ENCODE measurements at regions of chr6 and their contacts with region 1.

Region 1: DNA sequence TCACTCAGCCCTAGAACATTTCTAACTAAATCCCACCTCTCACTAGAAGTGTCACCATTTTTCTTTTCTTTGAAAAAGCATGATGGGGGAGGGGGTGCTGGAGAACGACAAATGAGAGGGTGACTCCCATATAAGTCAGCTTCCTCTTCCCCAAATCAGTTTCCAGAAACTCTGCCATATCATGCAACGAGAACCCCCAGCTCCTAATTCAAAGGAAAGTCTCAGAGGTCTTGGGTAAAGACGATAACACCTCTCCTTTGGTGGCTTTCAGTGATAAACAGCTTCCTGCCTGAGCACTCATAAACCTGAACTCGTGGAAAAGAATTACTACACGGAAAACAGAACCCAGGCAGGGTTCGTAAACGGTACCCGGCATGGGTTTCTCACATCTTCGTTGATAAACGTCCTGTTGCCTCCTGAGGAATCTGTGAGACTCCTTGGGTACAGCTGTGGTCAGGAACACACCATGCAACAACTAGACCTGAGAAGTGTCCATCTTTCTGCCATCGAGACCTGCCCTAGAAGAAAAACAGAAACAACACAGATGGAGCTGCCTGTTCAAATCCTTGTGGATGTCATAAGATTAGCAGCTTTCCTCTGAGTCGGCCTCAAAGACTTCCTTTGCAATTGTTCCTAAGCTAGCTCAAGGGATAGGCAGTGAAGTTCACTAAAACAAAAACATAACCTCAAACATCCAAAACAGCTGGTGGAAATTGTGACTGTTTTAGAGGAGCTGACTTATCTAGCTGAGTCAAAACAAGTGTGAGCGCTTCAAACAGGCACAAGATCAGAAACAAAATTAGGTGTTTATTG is 185.8 kb upstream of the PRDM1 start:
- DNase-seq: peak; percentile 83
- H3K4me3 Mint-ChIP-seq: peak overlapping the region; percentile 75
- H3K27ac Mint-ChIP-seq: peak overlapping the region; percentile 95
- H3K4me1 Mint-ChIP-seq: peaks cover 26% of the 10 kb centered on the region
- H3K27me3 Mint-ChIP-seq: no peaks in the 10 kb centered on the region

Region 2: GRCh38 chr6:105757512-105758200 is 142.7 kb before region 1 on chr6:
- intact Hi-C with region 1: loop called (anchors 1 kb)
- DNase-seq: peak; percentile 75
- H3K4me3 Mint-ChIP-seq: peak overlapping the region; percentile 46
- H3K27ac Mint-ChIP-seq: peak overlapping the region; percentile 89
- H3K4me1 Mint-ChIP-seq: peaks cover 46% of the 10 kb centered on the region
- H3K27me3 Mint-ChIP-seq: no peaks in the 10 kb centered on the region

Region 3: GRCh38 chr6:105810105-105810921 is 90.0 kb before region 1 on chr6:
- intact Hi-C with region 1: loop called (anchors 1 kb)
- DNase-seq: peak; percentile 89
- H3K4me3 Mint-ChIP-seq: peak overlapping the region; percentile 45
- H3K27ac Mint-ChIP-seq: peak overlapping the region; percentile 71
- H3K4me1 Mint-ChIP-seq: peaks cover 67% of the 10 kb centered on the region
- H3K27me3 Mint-ChIP-seq: no peaks in the 10 kb centered on the region

Region 4: GRCh38 chr6:105821027-105821426 is 79.3 kb before region 1 on chr6:
- intact Hi-C with region 1: no loop called
- DNase-seq: no peak
- H3K4me3 Mint-ChIP-seq: no peak overlapping the region
- H3K27ac Mint-ChIP-seq: no peak overlapping the region
- H3K4me1 Mint-ChIP-seq: peaks cover 18% of the 10 kb centered on the region
- H3K27me3 Mint-ChIP-seq: no peaks in the 10 kb centered on the region

Region 5: GRCh38 chr6:105859457-105859856 is 40.9 kb before region 1 on chr6:
- intact Hi-C with region 1: no loop called
- DNase-seq: no peak
- H3K4me3 Mint-ChIP-seq: no peak overlapping the region
- H3K27ac Mint-ChIP-seq: no peak overlapping the region
- H3K4me1 Mint-ChIP-seq: peaks cover 5% of the 10 kb centered on the region
- H3K27me3 Mint-ChIP-seq: peaks cover 16% of the 10 kb centered on the region

Region 6: GRCh38 chr6:105880030-105880492 is 20.3 kb before region 1 on chr6:
- intact Hi-C with region 1: loop called (anchors 1 kb)
- DNase-seq: peak; percentile 70
- H3K4me3 Mint-ChIP-seq: peak overlapping the region; percentile 70
- H3K27ac Mint-ChIP-seq: peak overlapping the region; percentile 25
- H3K4me1 Mint-ChIP-seq: peaks cover 39% of the 10 kb centered on the region
- H3K27me3 Mint-ChIP-seq: peaks cover 3% of the 10 kb centered on the region

Region 7: DNA sequence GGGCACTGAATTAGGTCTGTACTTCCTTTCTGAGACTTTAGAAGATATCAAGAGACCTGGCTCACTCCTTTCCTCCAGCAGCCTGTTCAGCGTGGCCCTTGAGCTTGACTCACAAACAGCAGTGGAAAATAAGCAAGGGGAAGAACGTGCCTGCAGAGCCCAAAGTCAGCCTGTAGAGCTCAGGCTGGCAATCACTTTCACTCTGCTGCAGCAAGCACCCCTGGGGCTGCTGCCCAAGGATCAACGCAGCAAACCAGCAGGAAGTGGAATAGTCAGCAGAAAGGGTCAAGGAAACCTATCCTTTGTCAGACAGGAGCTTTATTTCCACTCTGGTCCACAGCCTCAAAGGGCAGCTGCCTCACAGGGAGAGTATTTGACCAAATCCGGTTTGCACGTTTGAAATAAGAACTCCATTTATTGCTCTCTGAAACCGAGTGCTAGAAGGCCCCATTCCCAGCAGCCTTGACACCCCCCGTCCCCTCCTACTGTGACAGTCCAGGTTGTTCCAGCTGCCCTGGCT is 263.2 kb after region 1 on chr6:
- intact Hi-C with region 1: loop called (anchors 1 kb)
- DNase-seq: peak; percentile 88
- H3K4me3 Mint-ChIP-seq: peak overlapping the region; percentile 71
- H3K27ac Mint-ChIP-seq: peak overlapping the region; percentile 92
- H3K4me1 Mint-ChIP-seq: peaks cover 53% of the 10 kb centered on the region
- H3K27me3 Mint-ChIP-seq: no peaks in the 10 kb centered on the region

Region 8: DNA sequence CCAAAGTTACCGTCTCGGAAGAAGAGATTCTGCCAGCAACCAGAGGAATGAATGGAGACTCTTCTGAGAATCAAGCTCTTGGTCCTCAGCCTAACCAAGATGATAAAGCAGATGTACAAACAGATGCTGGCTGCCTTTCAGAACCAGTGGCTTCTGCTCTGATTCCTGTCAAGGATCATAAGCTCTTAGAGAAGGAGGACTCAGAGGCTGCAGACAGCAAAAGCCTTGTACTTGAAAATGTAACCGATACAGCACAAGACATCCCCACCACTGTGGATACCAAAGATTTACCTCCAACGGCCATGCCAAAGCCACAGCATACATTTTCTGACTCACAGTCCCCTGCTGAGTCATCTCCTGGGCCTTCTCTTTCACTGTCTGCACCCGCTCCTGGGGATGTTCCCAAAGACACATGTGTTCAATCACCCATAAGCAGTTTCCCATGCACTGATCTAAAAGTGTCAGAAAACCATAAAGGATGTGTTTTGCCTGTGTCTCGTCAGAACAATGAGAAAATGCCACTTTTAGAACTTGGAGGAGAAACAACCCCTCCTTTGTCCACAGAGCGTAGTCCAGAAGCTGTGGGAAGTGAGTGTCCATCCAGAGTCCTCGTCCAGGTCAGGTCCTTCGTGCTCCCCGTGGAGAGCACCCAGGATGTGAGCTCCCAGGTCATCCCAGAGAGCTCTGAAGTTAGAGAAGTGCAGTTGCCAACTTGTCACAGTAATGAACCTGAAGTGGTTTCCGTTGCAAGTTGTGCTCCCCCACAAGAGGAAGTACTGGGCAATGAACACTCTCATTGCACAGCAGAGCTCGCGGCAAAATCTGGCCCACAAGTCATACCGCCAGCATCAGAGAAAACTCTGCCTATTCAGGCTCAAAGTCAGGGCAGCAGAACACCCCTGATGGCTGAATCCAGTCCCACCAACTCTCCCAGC is 619.4 kb after region 1 on chr6:
- intact Hi-C with region 1: loop called (anchors 10 kb)
- DNase-seq: peak; percentile 92
- H3K4me3 Mint-ChIP-seq: peak overlapping the region; percentile 80
- H3K27ac Mint-ChIP-seq: peak overlapping the region; percentile 97
- H3K4me1 Mint-ChIP-seq: peaks cover 59% of the 10 kb centered on the region
- H3K27me3 Mint-ChIP-seq: no peaks in the 10 kb centered on the region